ENCODE measurements at regions of chr3 and their contacts with region 1.

Region 1: GRCh38 chr3:33798411-33799201 is at the start of gene PDCD6IP:
- DNase-seq: peak; percentile 88
- H3K4me3 Mint-ChIP-seq: peak within 1 kb of the TSS; percentile 95
- H3K27ac Mint-ChIP-seq: peak within 1 kb of the TSS; percentile 83
- H3K4me1 Mint-ChIP-seq: peaks cover 56% of the 10 kb centered on the region
- H3K27me3 Mint-ChIP-seq: no peaks in the 10 kb centered on the region
- total RNA-seq, gene PDCD6IP: 126 to 127 TPM

Region 2: GRCh38 chr3:33256249-33256648 is 542.4 kb before region 1 on chr3:
- CTCF ChIA-PET with region 1: no interaction called
- intact Hi-C with region 1: no loop called
- DNase-seq: no peak
- H3K4me3 Mint-ChIP-seq: no peak overlapping the region
- H3K27ac Mint-ChIP-seq: no peak overlapping the region
- H3K4me1 Mint-ChIP-seq: no peaks in the 10 kb centered on the region
- H3K27me3 Mint-ChIP-seq: peaks cover 6% of the 10 kb centered on the region

Region 3: GRCh38 chr3:33490641-33491241 is 307.9 kb before region 1 on chr3:
- CTCF ChIA-PET with region 1: no interaction called
- intact Hi-C with region 1: no loop called
- DNase-seq: no peak
- H3K4me3 Mint-ChIP-seq: no peak overlapping the region
- H3K27ac Mint-ChIP-seq: no peak overlapping the region
- H3K4me1 Mint-ChIP-seq: no peaks in the 10 kb centered on the region
- H3K27me3 Mint-ChIP-seq: no peaks in the 10 kb centered on the region

Region 4: GRCh38 chr3:33855884-33856546 is 57.4 kb after region 1 on chr3:
- CTCF ChIA-PET with region 1: no interaction called
- intact Hi-C with region 1: loop called (anchors 2 kb)
- DNase-seq: no peak
- H3K4me3 Mint-ChIP-seq: no peak overlapping the region
- H3K27ac Mint-ChIP-seq: peak overlapping the region; percentile 69
- H3K4me1 Mint-ChIP-seq: peaks cover 26% of the 10 kb centered on the region
- H3K27me3 Mint-ChIP-seq: no peaks in the 10 kb centered on the region

Region 5: DNA sequence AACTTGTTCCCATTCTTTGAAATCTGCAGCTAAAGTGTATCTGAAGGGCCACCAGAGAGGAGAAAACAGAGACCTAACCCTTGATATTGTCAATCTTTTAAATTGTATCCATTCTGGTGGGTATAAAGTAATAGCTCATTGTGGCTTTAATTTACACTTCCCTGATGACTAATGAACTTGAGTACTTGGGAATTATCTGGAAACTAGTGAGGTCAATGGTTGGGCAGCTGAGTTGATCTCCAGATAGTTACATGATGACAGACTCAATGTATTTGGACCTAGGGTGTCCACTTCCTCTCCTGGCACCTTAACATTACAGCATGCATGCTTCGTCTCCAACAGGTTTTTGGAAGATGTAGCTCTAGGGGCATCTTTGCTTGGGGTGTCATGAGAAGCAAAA is 195.0 kb after region 1 on chr3:
- CTCF ChIA-PET with region 1: no interaction called
- intact Hi-C with region 1: no loop called
- DNase-seq: no peak
- H3K4me3 Mint-ChIP-seq: no peak overlapping the region
- H3K27ac Mint-ChIP-seq: no peak overlapping the region
- H3K4me1 Mint-ChIP-seq: no peaks in the 10 kb centered on the region
- H3K27me3 Mint-ChIP-seq: peaks cover 4% of the 10 kb centered on the region

Measured in activated naive CD4-positive, alpha-beta T cell treated with anti-CD3 and anti-CD28 coated beads for 36 hours (primary cell).